Gastrocnemius medialis (tissue), 4 donors: ENCODE measurements at regions of chr7 and their contacts with region 1.

Region 1: GRCh38 chr7:101688183-101688831 is 59.2 kb upstream of the MYL10 start:
- DNase-seq: peak; percentile 40 to 60
- ATAC-seq: peak; percentile 80 to 82
- H3K4me3 ChIP-seq: peak overlapping the region; percentile 23 to 37 (median 28)
- H3K27ac ChIP-seq: no peak overlapping the region
- H3K4me1 ChIP-seq: peaks cover 5 to 6% of the 10 kb centered on the region in 2 donors
- H3K27me3 ChIP-seq: no peaks in the 10 kb centered on the region
- CTCF ChIP-seq: peak; percentile 90 to 98 (median 96)
- POLR2A ChIP-seq: no peak

Region 2: GRCh38 chr7:101453617-101454016 is 234.7 kb before region 1 on chr7:
- in situ Hi-C with region 1: no loop called
- intact Hi-C with region 1: no loop called
- DNase-seq: no peak
- ATAC-seq: no peak
- H3K4me3 ChIP-seq: no peak overlapping the region
- H3K27ac ChIP-seq: no peak overlapping the region
- H3K4me1 ChIP-seq: no peaks in the 10 kb centered on the region
- H3K27me3 ChIP-seq: no peaks in the 10 kb centered on the region
- CTCF ChIP-seq: no peak
- POLR2A ChIP-seq: no peak

Region 3: DNA sequence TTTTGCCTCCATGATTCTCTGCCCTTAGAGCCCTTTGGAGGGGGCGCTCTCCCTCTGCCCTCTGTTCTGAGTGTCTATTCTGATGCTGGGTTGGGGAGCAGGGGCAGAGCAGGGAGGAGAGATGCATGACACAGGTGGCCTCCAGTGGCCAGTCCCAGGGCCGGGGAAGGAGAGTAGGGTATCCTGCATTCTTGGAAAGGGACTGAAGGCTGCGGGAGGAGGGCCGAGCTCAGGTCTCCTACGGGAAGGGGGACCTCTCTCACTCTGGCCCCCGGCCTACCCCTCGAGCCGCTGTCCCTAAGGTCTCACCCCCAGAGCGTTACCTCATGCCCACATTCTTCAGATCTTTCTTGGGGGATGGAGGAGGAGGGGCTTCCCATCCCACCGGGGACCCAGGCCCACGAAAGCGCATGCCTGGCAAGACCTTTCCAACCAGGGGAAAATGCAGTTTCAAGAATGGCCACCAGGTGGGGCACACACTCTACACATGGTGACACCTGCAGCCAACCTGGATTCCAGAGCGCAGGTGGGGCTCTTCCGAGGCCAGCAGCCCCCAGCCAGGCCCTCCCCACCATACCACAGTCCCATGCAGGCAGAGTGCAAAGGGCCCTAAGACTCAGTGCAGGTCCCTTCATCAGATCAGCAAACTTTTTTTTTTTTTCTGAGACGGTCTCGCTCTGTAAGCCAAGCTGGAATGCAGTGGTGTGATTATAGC is 145.6 kb before region 1 on chr7:
- in situ Hi-C with region 1: no loop called
- intact Hi-C with region 1: loop called (anchors 10 kb)
- DNase-seq: peak; percentile 11 to 42
- ATAC-seq: peak; percentile 58 to 67
- H3K4me3 ChIP-seq: no peak overlapping the region
- H3K27ac ChIP-seq: no peak overlapping the region
- H3K4me1 ChIP-seq: no peaks in the 10 kb centered on the region
- H3K27me3 ChIP-seq: no peaks in the 10 kb centered on the region
- CTCF ChIP-seq: peak; percentile 79 to 94 (median 89)
- POLR2A ChIP-seq: no peak

Region 4: DNA sequence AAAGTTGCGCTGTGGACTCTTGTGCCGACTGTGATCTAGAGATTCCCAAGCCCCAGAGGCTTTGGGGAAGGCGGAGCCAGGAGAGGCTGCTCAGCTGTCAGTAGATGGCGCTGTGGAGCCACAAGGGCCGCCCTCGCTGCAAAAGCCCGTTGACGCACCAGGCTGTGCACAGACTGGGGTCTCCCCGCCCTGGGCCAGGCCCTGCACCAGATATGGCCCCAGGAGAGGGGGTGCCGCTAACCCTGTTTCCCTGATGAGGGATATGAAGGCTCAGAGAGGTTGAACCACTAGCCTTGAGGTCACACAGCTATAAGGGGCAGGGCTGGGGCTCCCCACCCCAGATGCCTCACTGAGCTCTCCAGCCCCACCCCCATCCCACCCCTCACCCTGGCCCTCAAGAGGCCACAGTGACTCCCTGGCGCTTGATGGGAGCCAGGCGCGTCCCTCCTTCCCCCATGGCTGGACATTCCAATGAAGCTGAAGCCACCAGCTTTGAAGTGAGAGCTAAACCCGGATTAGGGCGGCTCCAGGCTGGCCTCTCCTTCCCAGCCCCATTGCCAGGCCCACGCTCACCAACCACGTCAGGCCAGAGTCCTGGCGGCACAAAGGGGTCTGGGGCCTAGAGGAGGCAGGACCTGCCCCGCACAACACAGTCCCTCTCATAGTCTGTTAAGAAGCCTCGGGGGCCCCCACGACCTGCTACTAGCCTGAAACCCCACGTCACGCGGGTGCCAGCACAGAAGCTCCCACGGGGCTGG is 85.6 kb before region 1 on chr7:
- in situ Hi-C with region 1: no loop called
- intact Hi-C with region 1: loop called (anchors 5 kb)
- DNase-seq: peak; percentile 24 to 53
- ATAC-seq: peak; percentile 87 to 91
- H3K4me3 ChIP-seq: no peak overlapping the region
- H3K27ac ChIP-seq: no peak overlapping the region
- H3K4me1 ChIP-seq: peaks cover 0 to 4% of the 10 kb centered on the region in 2 donors
- H3K27me3 ChIP-seq: no peaks in the 10 kb centered on the region
- CTCF ChIP-seq: peak; percentile 65 to 92 (median 84)
- POLR2A ChIP-seq: no peak

Region 5: DNA sequence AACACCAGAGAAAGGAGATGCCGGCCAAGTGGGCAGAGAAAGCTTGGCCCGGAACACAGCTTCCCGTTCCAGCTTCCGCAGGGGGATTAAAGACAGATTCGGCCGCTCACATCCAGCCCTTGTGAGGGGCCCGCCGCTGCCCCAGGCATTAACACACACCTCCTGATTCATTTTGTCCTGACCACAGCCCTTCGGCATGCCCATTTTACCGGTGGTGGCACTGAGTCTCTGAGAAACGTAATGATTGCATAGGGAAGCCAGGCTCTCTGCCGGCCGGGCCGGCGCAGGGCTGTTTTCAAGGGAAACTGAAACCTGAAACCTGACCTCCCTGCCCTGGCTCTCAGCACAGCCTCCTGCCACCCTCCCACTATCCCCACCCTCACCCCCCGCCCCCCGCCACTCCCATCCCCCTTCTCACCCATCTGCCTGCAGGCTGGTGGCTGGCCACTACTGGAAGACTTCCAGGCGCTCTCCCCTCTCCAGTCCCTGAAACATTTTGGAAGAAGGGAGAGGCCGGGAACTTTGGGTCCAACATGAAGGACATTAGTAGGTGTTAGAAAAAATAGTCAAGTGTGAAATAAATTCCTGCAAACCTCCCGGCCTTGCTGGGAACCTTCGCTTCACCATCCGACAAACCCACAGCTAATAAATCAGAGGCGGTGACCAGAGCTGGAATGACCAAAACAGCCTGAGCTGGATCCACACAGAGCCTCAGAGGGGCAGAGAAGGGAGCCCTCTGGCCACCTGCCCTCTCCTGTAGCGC is 45.6 kb after region 1 on chr7:
- in situ Hi-C with region 1: no loop called
- intact Hi-C with region 1: no loop called
- DNase-seq: peak in 1 of 2 donors; percentile 53
- ATAC-seq: peak; percentile 83 to 84
- H3K4me3 ChIP-seq: peak overlapping the region; percentile 38 to 56 (median 44)
- H3K27ac ChIP-seq: peak overlapping the region; percentile 23 to 41 (median 29)
- H3K4me1 ChIP-seq: peaks cover 4 to 11% of the 10 kb centered on the region in 2 donors
- H3K27me3 ChIP-seq: no peaks in the 10 kb centered on the region
- CTCF ChIP-seq: no peak
- POLR2A ChIP-seq: no peak

Region 6: GRCh38 chr7:102272075-102272917 is 584.0 kb after region 1 on chr7:
- in situ Hi-C with region 1: loop called in 3 of 4 experiments (anchors 10 to 25 kb)
- intact Hi-C with region 1: no loop called
- DNase-seq: peak; percentile 52 to 71
- ATAC-seq: peak; percentile 81 to 91
- H3K4me3 ChIP-seq: no peak overlapping the region
- H3K27ac ChIP-seq: no peak overlapping the region
- H3K4me1 ChIP-seq: no peaks in the 10 kb centered on the region
- H3K27me3 ChIP-seq: no peaks in the 10 kb centered on the region
- CTCF ChIP-seq: peak; percentile 86 to 95 (median 93)
- POLR2A ChIP-seq: no peak

Region 7: DNA sequence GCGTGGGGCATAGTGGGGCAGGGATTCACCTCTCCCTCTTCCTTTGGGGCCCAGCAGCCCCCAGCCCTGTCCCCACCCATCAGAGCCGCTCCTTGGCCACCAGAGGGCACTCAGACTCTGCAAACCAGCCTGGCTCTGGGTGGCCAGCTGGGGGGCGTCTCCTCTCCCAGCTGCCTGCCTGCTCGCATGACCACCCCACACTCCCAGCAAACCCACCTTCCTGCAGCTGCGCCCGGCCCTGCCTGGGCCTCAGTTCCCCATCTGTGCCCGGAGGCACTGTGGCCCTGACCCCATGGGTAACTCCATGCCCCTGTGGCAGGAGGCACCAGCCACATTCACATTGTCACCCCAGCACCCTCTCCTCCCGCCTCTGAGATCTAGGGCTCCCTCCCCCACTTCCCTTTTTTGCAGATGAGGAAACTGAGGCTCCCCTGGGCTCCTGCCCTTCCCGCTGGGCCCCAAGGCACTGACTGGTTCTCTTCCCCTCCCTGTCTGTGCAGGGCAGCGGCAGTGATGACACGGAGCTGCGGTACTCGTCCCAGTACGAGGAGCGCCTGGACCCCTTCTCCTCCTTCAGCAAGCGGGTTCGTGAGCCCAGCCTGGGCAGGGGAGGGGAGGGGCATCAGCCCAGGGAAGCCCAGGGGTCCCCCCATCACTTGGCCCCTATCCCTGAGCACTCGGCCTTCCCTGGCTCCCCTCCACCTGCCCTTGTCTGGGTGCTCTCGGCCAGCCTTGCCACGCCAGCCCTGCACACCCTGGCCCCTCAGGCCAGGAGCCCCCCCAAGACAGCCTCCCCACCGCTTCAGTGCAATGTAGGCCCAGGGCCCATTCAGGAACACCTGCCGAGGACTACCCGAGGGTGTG is 591.5 kb after region 1 on chr7:
- in situ Hi-C with region 1: loop called in 3 of 4 experiments (anchors 10 to 25 kb)
- intact Hi-C with region 1: no loop called
- DNase-seq: peak in 1 of 2 donors; percentile 37
- ATAC-seq: peak; percentile 56 to 82
- H3K4me3 ChIP-seq: no peak overlapping the region
- H3K27ac ChIP-seq: no peak overlapping the region
- H3K4me1 ChIP-seq: peaks cover 0 to 6% of the 10 kb centered on the region in 2 donors
- H3K27me3 ChIP-seq: no peaks in the 10 kb centered on the region
- CTCF ChIP-seq: peak; percentile 86 to 95 (median 94)
- POLR2A ChIP-seq: no peak